ENCODE measurements at regions of chr15 and their contacts with region 1.

Region 1: DNA sequence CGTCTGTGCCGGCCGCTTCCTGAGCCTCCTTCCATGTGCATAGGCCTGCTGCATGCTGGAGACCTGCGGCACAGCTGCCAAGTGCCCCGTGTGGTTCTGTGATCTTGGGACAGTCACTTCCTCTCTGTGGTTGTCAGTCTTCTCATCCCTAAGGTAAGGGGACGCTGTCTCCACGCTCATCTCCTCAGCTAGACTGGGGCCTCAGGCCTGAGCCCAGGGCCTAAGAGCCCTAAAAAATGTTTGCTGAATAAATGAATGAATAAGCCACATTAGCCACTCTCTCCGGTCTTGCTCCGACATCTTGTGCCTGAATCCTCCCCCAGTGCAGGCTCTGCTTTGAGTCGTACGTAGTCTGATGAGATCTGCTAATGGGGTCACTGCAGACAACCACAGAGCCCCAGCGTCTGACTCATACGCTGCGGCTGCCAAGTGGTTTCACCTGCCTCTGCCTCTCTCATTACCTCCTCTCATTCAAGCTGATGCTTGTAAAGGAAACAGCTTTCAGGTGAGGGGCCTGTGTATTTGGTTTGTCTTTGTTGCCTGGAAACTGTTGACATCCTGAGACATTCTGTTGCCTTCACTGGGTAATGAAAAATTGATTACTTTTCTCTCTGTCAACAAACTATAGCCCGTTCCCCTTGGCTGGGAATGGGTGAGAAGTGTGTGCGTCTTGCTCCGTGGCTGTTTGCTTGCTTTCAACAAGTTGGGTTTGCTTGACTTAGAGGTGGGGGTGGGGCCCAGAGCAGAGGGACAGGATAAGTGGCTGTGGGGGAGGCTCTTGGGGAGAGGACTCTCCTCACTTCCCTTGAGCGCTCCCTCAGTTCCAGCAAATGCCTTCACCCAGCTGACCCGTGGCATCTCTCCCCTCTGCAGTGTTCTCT is 15.9 kb downstream of the RPLP1 start:
- DNase-seq: no peak
- ATAC-seq: peak; percentile 95
- H3K4me3 ChIP-seq: no peak overlapping the region
- H3K27ac ChIP-seq: no peak overlapping the region
- H3K4me1 ChIP-seq: peaks cover 18% of the 10 kb centered on the region
- H3K27me3 ChIP-seq: no peaks in the 10 kb centered on the region
- CTCF ChIP-seq: no peak
- EP300 ChIP-seq: peak; percentile 49 to 61
- POLR2A ChIP-seq: no peak
- RAD21 ChIP-seq: no peak

Region 2: GRCh38 chr15:69337133-69337532 is 131.3 kb before region 1 on chr15:
- CTCF ChIA-PET with region 1: no interaction called
- POLR2A ChIA-PET with region 1: no interaction called
- RAD21 ChIA-PET with region 1: no interaction called
- SMC1A ChIA-PET with region 1: no interaction called
- in situ Hi-C with region 1: no loop called
- intact Hi-C with region 1: no loop called
- DNase-seq: no peak
- ATAC-seq: no peak
- H3K4me3 ChIP-seq: no peak overlapping the region
- H3K27ac ChIP-seq: no peak overlapping the region
- H3K4me1 ChIP-seq: no peaks in the 10 kb centered on the region
- H3K27me3 ChIP-seq: no peaks in the 10 kb centered on the region; a peak in 2 of 4 replicates
- CTCF ChIP-seq: no peak
- EP300 ChIP-seq: no peak
- POLR2A ChIP-seq: no peak
- RAD21 ChIP-seq: no peak

Region 3: GRCh38 chr15:69452692-69453521 is 15.6 kb before region 1 on chr15 and contains the start of gene RPLP1:
- CTCF ChIA-PET with region 1: interaction called, 53 read pairs
- POLR2A ChIA-PET with region 1: interaction called, 29 read pairs
- RAD21 ChIA-PET with region 1: interaction called, 28 read pairs
- SMC1A ChIA-PET with region 1: interaction called, 13 read pairs
- in situ Hi-C with region 1: no loop called
- intact Hi-C with region 1: no loop called
- DNase-seq: peak; percentile 77
- ATAC-seq: peak; percentile 93
- H3K4me3 ChIP-seq: peak within 1 kb of the TSS; percentile 89
- H3K27ac ChIP-seq: peak within 1 kb of the TSS; percentile 79
- H3K4me1 ChIP-seq: peaks cover 5% of the 10 kb centered on the region; the same call in 1 of the 2 replicates
- H3K27me3 ChIP-seq: no peaks in the 10 kb centered on the region
- CTCF ChIP-seq: no peak
- EP300 ChIP-seq: no peak
- POLR2A ChIP-seq: peak; percentile 99
- RAD21 ChIP-seq: no peak
- polyA plus RNA-seq, gene RPLP1: 3,000 to 3,095 TPM